Colonic mucosa (tissue), 4 donors: ENCODE measurements at regions of chrX and their contacts with region 1.

Region 1: DNA sequence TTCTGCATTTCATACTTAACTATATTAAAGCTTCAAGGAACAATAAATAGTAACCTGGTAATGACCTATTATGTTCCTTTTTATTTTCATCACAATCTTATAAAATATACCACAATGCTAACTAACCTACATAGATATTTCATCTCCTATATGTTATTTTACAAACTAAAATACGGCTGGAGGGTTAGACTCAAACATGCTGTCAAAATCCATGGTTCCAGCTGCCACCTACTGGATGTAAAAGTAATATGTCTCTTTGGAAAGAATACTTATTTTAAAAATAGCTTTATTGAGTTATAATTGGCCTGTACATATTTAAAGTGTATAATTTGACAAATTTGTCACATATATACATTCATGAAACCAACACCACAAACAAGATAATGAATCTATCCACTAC is 15.0 kb downstream of the RGN start:
- DNase-seq: no peak
- H3K4me3 ChIP-seq: no peak overlapping the region
- H3K27ac ChIP-seq: no peak overlapping the region
- H3K4me1 ChIP-seq: no peaks in the 10 kb centered on the region
- H3K27me3 ChIP-seq: no peaks in the 10 kb centered on the region
- CTCF ChIP-seq: no peak

Region 2: GRCh38 chrX:46758906-46759644 is 334.2 kb before region 1 on chrX and contains the start of gene SLC9A7:
- intact Hi-C with region 1: loop called (anchors 5 kb)
- DNase-seq: peak; percentile 76
- H3K4me3 ChIP-seq: peak within 1 kb of the TSS; percentile 36
- H3K27ac ChIP-seq: no peak within 1 kb of the TSS
- H3K4me1 ChIP-seq: no peaks in the 10 kb centered on the region
- H3K27me3 ChIP-seq: no peaks in the 10 kb centered on the region
- CTCF ChIP-seq: peak; percentile 54
- total RNA-seq, gene SLC9A7: 1.4 to 2.2 TPM

Region 3: DNA sequence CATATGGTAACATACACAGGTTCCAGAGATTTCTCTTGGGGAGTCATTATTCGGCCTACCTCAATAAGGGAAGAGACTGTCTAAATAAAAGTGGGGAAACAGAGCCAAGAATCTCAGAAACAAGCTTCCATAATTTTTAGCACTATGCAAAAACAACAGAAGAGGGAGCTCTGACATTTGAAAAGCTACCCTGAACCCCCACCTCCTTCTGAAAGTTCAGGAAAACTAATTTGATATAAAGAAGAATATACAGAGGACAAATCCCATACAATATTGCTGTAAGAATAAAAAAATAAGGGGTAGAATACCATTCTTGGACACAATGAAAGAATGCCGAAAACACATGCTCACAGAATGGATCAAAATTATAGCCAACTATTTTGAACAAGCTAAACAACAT is 404.0 kb after region 1 on chrX:
- intact Hi-C with region 1: no loop called
- DNase-seq: no peak
- H3K4me3 ChIP-seq: no peak overlapping the region
- H3K27ac ChIP-seq: no peak overlapping the region
- H3K4me1 ChIP-seq: no peaks in the 10 kb centered on the region
- H3K27me3 ChIP-seq: no peaks in the 10 kb centered on the region
- CTCF ChIP-seq: no peak